Activated CD4-positive, alpha-beta T cell treated with anti-CD3 and anti-CD28 coated beads, Interleukin-2, amount 10 ng/mL, durations not matched to agents 24 days and 14 days (primary cell): ENCODE measurements at regions of chr2 and their contacts with region 1.

Region 1: DNA sequence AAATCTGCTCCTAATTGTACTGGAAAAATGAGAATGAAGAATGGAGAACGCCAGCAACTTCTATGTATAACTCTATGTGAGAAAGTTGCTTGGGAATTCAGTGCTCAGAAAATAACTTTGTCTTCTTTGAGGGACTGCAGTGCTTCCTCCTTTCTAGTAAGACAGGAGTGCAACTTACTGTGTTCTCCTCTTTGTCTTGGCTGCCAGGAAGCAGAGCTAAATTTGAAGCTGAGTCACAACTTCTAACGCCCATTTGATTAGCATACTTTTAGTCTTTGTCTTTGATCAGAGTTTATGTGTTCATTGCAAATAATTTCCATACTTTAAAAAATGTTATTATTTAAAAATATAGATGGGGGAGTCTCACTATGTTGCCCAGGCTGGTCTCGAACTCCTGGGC is 6.6 kb downstream of the ARHGAP25 start:
- DNase-seq: peak; percentile 73
- H3K4me3 Mint-ChIP-seq: no peak overlapping the region
- H3K27ac Mint-ChIP-seq: peak overlapping the region; percentile 98
- H3K4me1 Mint-ChIP-seq: peaks cover 85% of the 10 kb centered on the region
- H3K27me3 Mint-ChIP-seq: no peaks in the 10 kb centered on the region

Region 2: GRCh38 chr2:68726608-68727367 is 14.4 kb before region 1 on chr2:
- intact Hi-C with region 1: loop called (anchors 2 kb)
- DNase-seq: peak; percentile 92
- H3K4me3 Mint-ChIP-seq: peak overlapping the region; percentile 56
- H3K27ac Mint-ChIP-seq: peak overlapping the region; percentile 82
- H3K4me1 Mint-ChIP-seq: peaks cover 70% of the 10 kb centered on the region
- H3K27me3 Mint-ChIP-seq: no peaks in the 10 kb centered on the region